ENCODE measurements at regions of chr17 and their contacts with region 1.

Region 1: DNA sequence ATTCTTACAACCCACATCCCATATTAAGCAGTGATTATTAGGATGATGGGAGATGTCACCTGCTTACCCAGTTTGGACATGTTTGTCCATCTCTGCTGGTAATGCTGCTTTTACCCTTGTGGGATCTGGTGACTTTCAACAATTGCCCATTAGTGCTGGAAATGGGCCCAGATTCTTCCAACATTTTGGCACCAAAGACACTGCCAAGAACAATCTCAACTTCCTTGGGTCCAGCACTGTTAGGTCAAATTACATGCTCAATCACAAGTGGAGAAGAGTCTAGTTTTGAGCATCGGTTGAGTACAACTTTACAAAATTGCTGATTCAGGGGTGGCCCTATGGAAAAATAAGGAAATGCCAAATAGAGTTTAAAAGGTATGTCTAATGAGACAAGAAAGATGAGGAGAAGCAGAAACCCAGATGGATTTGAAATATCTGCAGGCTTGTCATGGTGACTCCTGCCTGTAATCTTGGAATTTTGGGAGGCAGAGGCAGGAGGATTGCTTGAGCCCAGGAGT is 13.0 kb upstream of the ZFP3 start:
- DNase-seq: no peak
- ATAC-seq: no peak
- H3K4me3 ChIP-seq: no peak overlapping the region
- H3K27ac ChIP-seq: no peak overlapping the region
- H3K4me1 ChIP-seq: no peaks in the 10 kb centered on the region
- H3K27me3 ChIP-seq: no peaks in the 10 kb centered on the region
- CTCF ChIP-seq: no peak
- EP300 ChIP-seq: no peak
- POLR2A ChIP-seq: no peak
- RAD21 ChIP-seq: no peak

Region 2: DNA sequence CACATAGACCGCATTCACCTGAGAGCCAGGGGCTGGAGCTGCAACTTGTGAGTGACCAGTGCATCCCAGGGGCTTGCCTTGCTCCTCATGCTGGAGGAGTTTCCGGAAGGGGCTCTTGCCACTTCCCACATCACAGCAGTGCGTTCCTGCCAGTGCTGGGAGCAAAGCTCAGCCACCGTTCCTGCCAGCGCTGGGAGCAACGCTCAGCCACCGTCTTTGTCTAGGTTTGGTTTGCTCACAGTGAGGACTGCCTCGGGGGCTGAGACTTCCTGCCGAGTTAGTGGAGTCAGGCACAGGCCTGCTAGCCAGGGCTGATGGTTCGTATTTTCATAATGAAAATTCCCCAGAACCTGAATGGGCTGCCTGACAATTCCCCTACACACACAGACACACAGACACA is 157.0 kb before region 1 on chr17:
- CTCF ChIA-PET with region 1: interaction called, 35 read pairs
- POLR2A ChIA-PET with region 1: no interaction called
- RAD21 ChIA-PET with region 1: interaction called, 23 read pairs
- SMC1A ChIA-PET with region 1: interaction called, 20 read pairs
- in situ Hi-C with region 1: no loop called
- intact Hi-C with region 1: loop called (anchors 1 kb)
- DNase-seq: no peak
- ATAC-seq: no peak
- H3K4me3 ChIP-seq: no peak overlapping the region
- H3K27ac ChIP-seq: no peak overlapping the region
- H3K4me1 ChIP-seq: peaks cover 7% of the 10 kb centered on the region
- H3K27me3 ChIP-seq: no peaks in the 10 kb centered on the region; a peak in 1 of 4 replicates
- CTCF ChIP-seq: no peak
- EP300 ChIP-seq: no peak
- POLR2A ChIP-seq: no peak
- RAD21 ChIP-seq: no peak

Region 3: GRCh38 chr17:4980644-4981216 is 84.6 kb before region 1 on chr17:
- CTCF ChIA-PET with region 1: interaction called, 55 read pairs
- POLR2A ChIA-PET with region 1: interaction called, 4 read pairs
- RAD21 ChIA-PET with region 1: interaction called, 15 read pairs
- SMC1A ChIA-PET with region 1: interaction called, 29 read pairs
- in situ Hi-C with region 1: loop called (anchors 5 kb)
- intact Hi-C with region 1: loop called (anchors 1 kb)
- DNase-seq: no peak
- ATAC-seq: peak; percentile 92
- H3K4me3 ChIP-seq: no peak overlapping the region
- H3K27ac ChIP-seq: 0 out of 2 replicates have a peak overlapping the region, but pooled peaks have one; percentile 3
- H3K4me1 ChIP-seq: peaks cover 12% of the 10 kb centered on the region
- H3K27me3 ChIP-seq: no peaks in the 10 kb centered on the region
- CTCF ChIP-seq: peak; percentile 63 to 68 (median 66)
- EP300 ChIP-seq: no peak
- POLR2A ChIP-seq: no peak; the same call in 1 of the 2 replicates
- RAD21 ChIP-seq: peak; percentile 65

Region 4: DNA sequence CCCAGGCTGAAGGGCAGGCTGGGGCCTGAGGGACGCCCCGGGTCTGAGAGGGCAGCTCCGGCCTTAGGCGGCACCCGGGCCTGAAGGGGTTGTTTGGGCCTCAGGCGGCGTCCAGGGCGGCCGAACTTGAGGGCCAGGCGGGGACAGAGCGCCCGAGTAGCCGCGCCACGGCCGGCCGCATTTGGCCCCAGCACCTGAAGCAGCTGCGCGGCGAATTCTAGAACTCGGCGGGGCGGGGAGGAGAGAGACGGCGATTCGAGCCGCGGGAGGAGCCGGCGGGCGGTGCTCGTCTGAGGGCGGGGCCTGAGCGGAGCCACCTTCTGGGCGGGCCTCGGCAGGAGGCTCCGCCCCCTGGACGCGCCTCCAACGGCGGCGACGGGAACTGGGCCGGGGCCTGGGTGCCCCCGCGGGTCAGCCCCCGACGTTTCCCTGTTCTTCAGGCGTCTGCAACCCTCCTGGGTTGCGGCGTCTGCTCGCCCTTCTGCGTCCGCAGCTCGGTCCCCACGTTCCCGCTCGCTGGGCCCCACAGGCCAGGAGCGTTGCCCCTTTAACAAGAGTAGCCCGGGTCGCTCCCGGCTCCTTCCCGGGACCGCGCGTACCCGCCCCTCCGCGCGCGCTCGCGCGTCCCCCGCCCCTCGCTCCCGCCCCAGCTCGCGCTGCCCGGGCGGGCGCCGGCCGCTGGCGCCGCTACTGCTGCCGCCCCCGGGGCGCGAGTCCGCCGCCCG is 67.8 kb before region 1 on chr17 and contains the starts of genes INCA1 and KIF1C:
- CTCF ChIA-PET with region 1: interaction called, 12 read pairs
- POLR2A ChIA-PET with region 1: interaction called, 3 read pairs
- RAD21 ChIA-PET with region 1: no interaction called
- SMC1A ChIA-PET with region 1: interaction called, 3 read pairs
- in situ Hi-C with region 1: no loop called
- intact Hi-C with region 1: no loop called
- DNase-seq: peak; percentile 42
- ATAC-seq: peak; percentile 93
- H3K4me3 ChIP-seq: peak within 1 kb of the TSS; percentile 99
- H3K27ac ChIP-seq: peak within 1 kb of the TSS; percentile 80
- H3K4me1 ChIP-seq: peaks cover 11% of the 10 kb centered on the region
- H3K27me3 ChIP-seq: no peaks in the 10 kb centered on the region
- CTCF ChIP-seq: no peak
- EP300 ChIP-seq: no peak
- POLR2A ChIP-seq: peak; percentile 70
- RAD21 ChIP-seq: no peak
- polyA plus RNA-seq, gene INCA1: 0.61 to 0.64 TPM
- polyA plus RNA-seq, gene KIF1C: 1.4 to 1.5 TPM

Region 5: DNA sequence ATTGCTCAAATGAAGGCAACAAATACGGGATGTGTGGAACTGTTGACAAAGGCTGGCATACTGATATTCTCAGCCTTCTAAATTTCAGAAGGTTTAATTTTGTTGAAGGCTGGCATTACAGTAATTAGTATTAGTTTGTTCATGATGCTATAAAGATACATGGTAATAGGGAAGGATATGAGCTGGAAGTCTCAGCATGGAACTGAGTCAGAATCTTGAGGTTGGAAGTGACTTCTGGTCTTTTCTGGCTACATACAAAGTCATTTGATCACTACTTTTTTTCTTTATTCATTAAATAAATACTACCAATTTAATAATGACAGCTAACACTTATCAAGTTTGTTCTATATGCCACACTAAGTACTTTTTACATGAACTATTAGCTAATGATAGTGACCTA is 239.3 kb after region 1 on chr17:
- CTCF ChIA-PET with region 1: no interaction called
- POLR2A ChIA-PET with region 1: no interaction called
- RAD21 ChIA-PET with region 1: no interaction called
- SMC1A ChIA-PET with region 1: no interaction called
- in situ Hi-C with region 1: no loop called
- intact Hi-C with region 1: no loop called
- DNase-seq: no peak
- ATAC-seq: no peak
- H3K4me3 ChIP-seq: no peak overlapping the region
- H3K27ac ChIP-seq: no peak overlapping the region
- H3K4me1 ChIP-seq: peaks cover 32% of the 10 kb centered on the region
- H3K27me3 ChIP-seq: no peaks in the 10 kb centered on the region
- CTCF ChIP-seq: no peak
- EP300 ChIP-seq: no peak
- POLR2A ChIP-seq: no peak
- RAD21 ChIP-seq: no peak